ENCODE measurements at regions of chr10 and their contacts with region 1.

Region 1: GRCh38 chr10:60208676-60209269 is 180.9 kb downstream of the ANK3 start:
- DNase-seq: peak; percentile 22
- H3K4me3 ChIP-seq: no peak overlapping the region
- CTCF ChIP-seq: peak; percentile 79

Region 2: DNA sequence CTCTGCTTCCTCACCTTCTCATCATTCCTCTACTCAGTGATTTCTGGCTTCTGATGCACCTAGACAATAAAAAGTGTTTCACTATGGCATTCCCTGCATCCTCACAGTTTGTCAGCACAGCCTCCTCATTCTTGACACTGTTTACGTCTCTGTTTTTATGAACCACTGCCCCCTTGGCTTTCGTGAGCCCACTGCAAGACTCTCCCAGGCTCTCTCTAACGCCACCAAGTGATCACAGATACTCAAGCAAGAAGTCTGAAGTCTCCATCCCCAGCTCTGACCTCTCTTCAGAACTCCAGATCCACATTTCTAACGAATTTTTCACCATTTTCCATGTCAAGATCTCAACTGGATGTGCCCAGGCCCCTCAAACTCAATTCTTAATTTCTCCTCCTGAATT is 508.1 kb before region 1 on chr10:
- in situ Hi-C with region 1: no loop called
- DNase-seq: no peak
- H3K4me3 ChIP-seq: no peak overlapping the region
- CTCF ChIP-seq: peak; percentile 6

Region 3: GRCh38 chr10:60073781-60074656 is 134.8 kb before region 1 on chr10:
- in situ Hi-C with region 1: no loop called
- DNase-seq: no peak
- H3K4me3 ChIP-seq: no peak overlapping the region
- CTCF ChIP-seq: no peak

Region 4: GRCh38 chr10:60162631-60163030 is 46.1 kb before region 1 on chr10:
- in situ Hi-C with region 1: loop called (anchors 5 kb)
- DNase-seq: no peak
- H3K4me3 ChIP-seq: no peak overlapping the region
- CTCF ChIP-seq: no peak

Region 5: DNA sequence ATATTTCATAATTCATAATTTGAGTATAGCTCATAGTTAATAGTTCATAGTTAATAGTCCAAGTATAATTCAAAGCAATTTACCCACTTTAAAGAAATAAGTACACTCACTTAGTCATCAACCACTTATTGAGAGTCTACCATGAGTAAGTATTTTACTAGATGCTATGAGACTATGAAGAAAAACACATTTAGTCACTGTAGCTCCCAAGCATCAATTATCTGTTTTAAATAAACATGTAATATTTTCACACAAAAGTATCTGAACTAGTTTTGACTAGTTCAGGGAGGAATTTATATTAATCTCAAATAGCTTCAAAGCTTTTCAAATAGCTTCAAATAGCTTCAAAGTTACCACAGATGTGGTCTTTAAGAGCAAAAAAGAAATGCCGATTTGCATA is 61.7 kb after region 1 on chr10:
- in situ Hi-C with region 1: no loop called
- DNase-seq: peak; percentile 8
- H3K4me3 ChIP-seq: no peak overlapping the region
- CTCF ChIP-seq: no peak